PC-3 (cell line): ENCODE measurements at regions of chr1 and their contacts with region 1.

Region 1: GRCh38 chr1:204059970-204060369 is 12.9 kb upstream of the SOX13 start:
- DNase-seq: no peak
- ATAC-seq: no peak
- H3K4me3 ChIP-seq: no peak overlapping the region
- H3K27ac ChIP-seq: no peak overlapping the region
- H3K4me1 ChIP-seq: peaks cover 32% of the 10 kb centered on the region
- H3K27me3 ChIP-seq: no peaks in the 10 kb centered on the region
- CTCF ChIP-seq: no peak

Region 2: DNA sequence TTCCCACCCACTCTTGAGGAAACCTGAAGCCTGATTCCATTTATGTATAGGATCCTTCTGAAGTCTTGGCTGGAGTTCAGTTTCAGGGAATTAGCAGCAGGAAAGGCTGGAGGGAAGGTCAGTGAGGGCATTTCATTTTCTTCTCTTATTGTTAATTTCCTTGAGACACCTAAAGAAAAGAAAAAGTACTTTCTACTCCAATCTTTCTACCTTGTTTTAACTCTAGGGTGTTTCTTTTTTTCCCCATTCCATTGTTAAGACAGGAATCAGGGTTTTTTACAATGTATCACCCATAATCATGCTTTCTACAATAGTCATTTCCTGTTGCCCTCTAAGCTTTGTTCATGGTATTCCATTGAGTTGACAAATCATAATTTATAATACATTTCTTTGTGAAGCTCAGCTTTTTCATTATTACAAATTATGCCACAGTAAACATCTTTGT is 171.1 kb before region 1 on chr1:
- CTCF ChIA-PET with region 1: no interaction called
- POLR2A ChIA-PET with region 1: no interaction called
- intact Hi-C with region 1: loop called (anchors 5 kb)
- DNase-seq: peak; percentile 86
- ATAC-seq: peak; percentile 90
- H3K4me3 ChIP-seq: peak overlapping the region; percentile 53
- H3K27ac ChIP-seq: peak overlapping the region; percentile 86
- H3K4me1 ChIP-seq: peaks cover 20% of the 10 kb centered on the region
- H3K27me3 ChIP-seq: no peaks in the 10 kb centered on the region
- CTCF ChIP-seq: no peak

Region 3: DNA sequence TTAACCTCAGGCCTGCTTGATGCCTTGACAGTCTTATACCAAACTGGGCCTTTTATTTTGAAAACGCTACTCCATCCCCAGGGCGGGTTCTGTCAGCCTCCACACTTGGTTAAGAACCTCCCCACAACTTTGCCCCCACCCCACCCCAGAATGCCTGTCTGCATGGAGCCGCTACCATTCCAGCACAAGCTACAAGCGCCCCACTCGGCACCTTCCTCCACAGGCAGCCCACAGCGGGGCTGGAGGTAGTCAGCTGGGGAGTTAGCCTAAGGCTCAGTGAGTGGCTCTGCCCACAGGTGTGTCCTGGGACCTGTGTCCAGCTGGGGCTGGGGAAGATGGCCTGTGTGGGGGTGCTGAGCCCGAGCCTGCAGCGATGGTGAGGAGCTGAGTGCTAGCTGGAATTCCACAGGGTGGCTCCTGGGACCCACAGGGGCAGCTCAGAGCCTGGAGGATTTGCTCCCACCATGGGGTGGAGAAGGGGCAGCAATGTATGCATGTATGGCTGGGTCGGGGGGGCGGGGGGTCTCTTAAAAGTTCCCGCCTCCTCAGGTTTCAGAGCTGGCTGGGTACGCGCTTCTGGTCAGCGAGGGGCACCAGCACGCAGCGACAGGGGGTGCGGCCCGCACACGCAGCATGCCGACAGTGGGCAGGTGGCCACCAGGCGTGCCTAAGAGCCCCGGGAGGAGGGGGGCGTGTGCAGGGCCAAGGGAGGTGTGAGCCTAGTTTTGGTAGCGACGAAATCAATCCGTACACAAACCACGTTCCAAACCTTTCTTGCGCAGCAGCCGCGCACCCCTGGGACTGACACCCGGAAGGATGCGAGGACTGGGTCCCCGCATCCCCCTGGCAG is 91.0 kb after region 1 on chr1:
- CTCF ChIA-PET with region 1: no interaction called
- POLR2A ChIA-PET with region 1: no interaction called
- intact Hi-C with region 1: no loop called
- DNase-seq: no peak
- ATAC-seq: peak; percentile 12
- H3K4me3 ChIP-seq: peak overlapping the region; percentile 71
- H3K27ac ChIP-seq: no peak overlapping the region
- H3K4me1 ChIP-seq: peaks cover 14% of the 10 kb centered on the region; the same call in 1 of the 2 replicates
- H3K27me3 ChIP-seq: no peaks in the 10 kb centered on the region
- CTCF ChIP-seq: no peak